ENCODE measurements at regions of chr15 and their contacts with region 1.

Region 1: DNA sequence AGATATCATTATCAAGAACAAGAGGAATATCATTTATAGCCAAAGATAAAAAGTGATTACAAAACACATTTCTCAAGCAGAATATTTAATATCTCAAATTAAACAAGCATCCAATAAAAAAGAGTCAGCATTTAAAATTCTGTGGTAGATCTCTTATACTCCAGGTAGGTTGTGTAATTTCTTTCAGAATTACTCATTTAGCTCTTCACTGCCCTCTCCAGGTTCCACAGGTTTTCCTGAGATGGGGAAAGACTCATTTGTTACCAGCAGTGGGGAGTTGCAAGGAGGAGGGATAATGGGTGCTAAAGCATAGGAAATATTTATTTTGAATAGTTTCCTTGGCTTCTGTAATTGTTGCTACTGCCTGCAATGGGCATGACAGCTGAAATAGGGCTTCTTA is 83.1 kb upstream of the RASGRP1 start:
- DNase-seq: no peak
- ATAC-seq: no peak
- H3K4me3 ChIP-seq: no peak overlapping the region
- H3K27ac ChIP-seq: no peak overlapping the region
- H3K4me1 ChIP-seq: peaks cover 0 to 7% (median 0%) of the 10 kb centered on the region in 9 donors
- H3K27me3 ChIP-seq: peaks cover 0 to 10% (median 0%) of the 10 kb centered on the region in 7 donors
- CTCF ChIP-seq: peak in 7 of 9 donors; percentile 18 to 45 (median 34)

Region 2: DNA sequence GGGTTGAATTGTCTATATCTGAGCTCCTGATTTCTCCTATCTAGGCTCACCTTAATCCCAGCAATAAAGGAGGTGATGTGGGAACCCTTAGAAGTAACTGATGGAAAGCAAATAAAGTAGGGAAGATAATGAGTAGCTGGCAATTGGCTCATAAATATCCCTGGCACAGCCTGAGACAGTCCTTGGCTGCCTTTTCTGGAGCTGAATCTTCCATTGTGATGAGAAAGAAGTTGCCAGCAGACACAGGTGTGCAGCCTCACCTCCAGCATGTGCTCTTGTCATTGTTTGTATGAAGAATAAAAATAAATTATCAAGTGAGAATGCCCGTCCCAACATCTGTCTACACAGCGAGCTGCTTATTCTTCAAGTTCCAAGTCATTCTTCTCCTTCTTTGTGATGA is 29.9 kb before region 1 on chr15:
- intact Hi-C with region 1: loop called in 1 of 10 experiments (anchors 1 kb)
- DNase-seq: no peak
- ATAC-seq: no peak
- H3K4me3 ChIP-seq: no peak overlapping the region
- H3K27ac ChIP-seq: no peak overlapping the region
- H3K4me1 ChIP-seq: peaks cover 0 to 17% (median 0%) of the 10 kb centered on the region in 9 donors
- H3K27me3 ChIP-seq: no peaks in the 10 kb centered on the region
- CTCF ChIP-seq: no peak

Region 3: GRCh38 chr15:38699633-38700230 is 52.0 kb after region 1 on chr15:
- intact Hi-C with region 1: no loop called
- DNase-seq: peak; percentile 11 to 55
- ATAC-seq: peak in 3 of 8 donors; percentile 40 to 50 (median 49)
- H3K4me3 ChIP-seq: no peak overlapping the region
- H3K27ac ChIP-seq: no peak overlapping the region
- H3K4me1 ChIP-seq: peaks cover 0 to 10% (median 0%) of the 10 kb centered on the region in 9 donors
- H3K27me3 ChIP-seq: peaks cover 0 to 15% (median 0%) of the 10 kb centered on the region in 7 donors
- CTCF ChIP-seq: peak; percentile 59 to 93 (median 81)